ENCODE measurements at regions of chr10 and their contacts with region 1.

Region 1: DNA sequence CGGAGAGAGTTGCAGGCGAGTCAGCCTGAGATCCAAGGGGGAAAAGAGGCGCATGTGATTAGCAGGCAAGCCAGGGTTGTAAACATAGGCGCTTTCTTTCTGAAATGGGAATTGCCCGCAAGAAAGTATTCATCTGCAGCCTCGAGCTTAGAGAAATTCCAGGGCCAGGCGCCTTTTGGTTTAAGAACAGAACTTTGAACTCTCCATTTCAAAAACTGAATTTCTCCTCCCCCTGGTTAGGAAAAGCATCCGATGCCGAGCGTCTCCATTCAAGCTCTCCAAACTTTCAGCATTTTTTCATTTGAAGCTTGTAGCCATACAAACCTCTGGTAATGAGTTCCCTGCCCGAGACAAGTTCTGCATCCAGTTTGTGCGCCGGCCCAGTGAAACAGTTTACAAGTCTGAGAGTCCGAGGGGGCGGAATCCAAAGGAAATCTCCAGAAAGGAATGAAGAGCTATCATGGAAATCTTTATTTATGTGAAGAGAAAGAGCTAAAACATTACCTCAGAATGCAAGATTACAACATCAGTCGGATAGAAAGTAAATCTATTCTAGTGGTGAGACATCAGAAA is 69.9 kb downstream of the FAM204A start:
- DNase-seq: no peak
- ATAC-seq: peak; percentile 71

Region 2: GRCh38 chr10:118333871-118334270 is 61.6 kb after region 1 on chr10:
- intact Hi-C with region 1: loop called (anchors 2 kb)
- DNase-seq: no peak
- ATAC-seq: no peak

Region 3: DNA sequence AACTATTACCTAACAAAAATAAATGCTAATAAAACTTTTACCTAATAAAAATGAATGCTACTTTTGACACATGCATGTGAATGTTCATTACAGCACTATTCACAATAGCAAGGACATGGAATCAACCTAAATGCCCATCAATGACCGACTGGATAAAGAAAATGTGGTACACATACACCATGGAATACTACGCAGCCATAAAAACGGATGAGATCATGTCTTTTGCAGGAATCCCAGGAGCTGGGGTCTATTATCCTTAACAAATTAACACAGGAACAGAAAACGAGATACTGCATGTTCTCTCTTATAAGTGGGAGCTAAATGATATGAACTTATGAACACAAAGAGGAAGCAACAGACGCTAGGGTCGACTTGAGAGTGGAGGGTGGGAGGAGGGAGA is 158.0 kb after region 1 on chr10:
- intact Hi-C with region 1: no loop called
- DNase-seq: no peak
- ATAC-seq: no peak